ENCODE measurements at regions of chr2 and their contacts with region 1.

Region 1: GRCh38 chr2:119702918-119703401 is 24.0 kb downstream of the TMEM177 start:
- DNase-seq: peak; percentile 39 to 89 (median 74)
- ATAC-seq: peak; percentile 98 to 99 (median 99)
- H3K4me3 ChIP-seq: no peak overlapping the region
- H3K27ac ChIP-seq: no peak overlapping the region
- H3K4me1 ChIP-seq: no peaks in the 10 kb centered on the region
- H3K27me3 ChIP-seq: no peaks in the 10 kb centered on the region
- CTCF ChIP-seq: peak; percentile 90 to 99 (median 96)

Region 2: DNA sequence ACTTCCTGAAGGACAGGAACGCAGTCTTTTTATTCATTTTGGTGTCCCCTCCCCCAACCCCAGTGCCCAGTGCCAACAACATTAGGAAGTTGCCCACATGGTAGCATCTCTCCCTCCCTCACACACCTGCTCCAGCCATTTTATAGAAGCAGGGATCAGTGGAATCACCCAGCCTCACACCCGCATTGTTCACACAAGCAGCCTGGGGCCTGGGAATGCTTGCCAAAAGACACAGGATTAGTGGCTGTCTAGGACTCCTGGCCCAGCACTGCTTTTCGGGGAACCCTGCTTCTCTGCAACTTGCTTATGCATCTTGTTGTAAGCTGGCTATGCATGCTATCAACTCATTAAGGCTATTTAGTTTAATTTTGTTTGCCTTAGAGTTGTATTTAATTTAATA is 253.4 kb before region 1 on chr2:
- intact Hi-C with region 1: no loop called
- DNase-seq: no peak
- ATAC-seq: no peak
- H3K4me3 ChIP-seq: no peak overlapping the region
- H3K27ac ChIP-seq: no peak overlapping the region
- H3K4me1 ChIP-seq: no peaks in the 10 kb centered on the region
- H3K27me3 ChIP-seq: no peaks in the 10 kb centered on the region
- CTCF ChIP-seq: no peak

Region 3: GRCh38 chr2:119826370-119826961 is 123.5 kb after region 1 on chr2:
- intact Hi-C with region 1: loop called in 1 of 3 experiments (anchors 10 kb)
- DNase-seq: no peak
- ATAC-seq: peak in 3 of 4 donors; percentile 28 to 66 (median 56)
- H3K4me3 ChIP-seq: no peak overlapping the region
- H3K27ac ChIP-seq: no peak overlapping the region
- H3K4me1 ChIP-seq: no peaks in the 10 kb centered on the region
- H3K27me3 ChIP-seq: no peaks in the 10 kb centered on the region
- CTCF ChIP-seq: peak in 1 of 4 donors; percentile 12

Region 4: GRCh38 chr2:119996148-119996547 is 293.2 kb after region 1 on chr2:
- intact Hi-C with region 1: no loop called
- DNase-seq: no peak
- ATAC-seq: no peak
- H3K4me3 ChIP-seq: no peak overlapping the region
- H3K27ac ChIP-seq: no peak overlapping the region
- H3K4me1 ChIP-seq: no peaks in the 10 kb centered on the region
- H3K27me3 ChIP-seq: no peaks in the 10 kb centered on the region
- CTCF ChIP-seq: no peak

Region 5: DNA sequence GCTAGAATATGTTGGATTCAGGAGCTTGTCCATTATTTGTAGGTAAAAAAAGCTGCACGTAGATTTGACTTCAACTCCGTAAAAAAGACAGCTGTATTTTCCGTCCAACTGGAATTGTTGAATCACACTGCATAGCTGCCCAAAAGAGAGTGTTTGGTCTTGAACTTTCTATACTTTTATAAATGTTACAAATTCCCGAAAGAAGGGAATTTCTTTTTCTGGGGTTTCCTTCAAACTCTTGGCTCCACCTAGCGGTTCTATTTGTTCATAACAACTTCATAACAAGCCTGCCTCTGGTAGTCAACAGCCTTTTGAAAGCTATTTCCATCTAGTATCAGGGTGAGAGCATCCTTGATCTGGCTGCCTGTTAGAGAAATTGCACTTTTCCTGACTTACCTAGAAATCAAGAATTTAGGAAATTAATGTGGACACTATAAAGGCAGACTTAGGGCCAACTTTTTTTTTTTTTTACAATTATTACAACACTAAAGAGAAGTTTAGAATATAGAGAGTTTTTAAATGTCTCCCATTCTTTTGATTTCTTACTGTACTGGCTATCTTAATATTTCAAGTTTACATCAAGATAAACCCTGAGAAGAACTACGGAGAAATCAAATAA is 472.1 kb after region 1 on chr2:
- intact Hi-C with region 1: loop called in 2 of 3 experiments (anchors 5 to 10 kb)
- DNase-seq: peak in 1 of 6 donors; percentile 31
- ATAC-seq: peak; percentile 56 to 84 (median 78)
- H3K4me3 ChIP-seq: no peak overlapping the region
- H3K27ac ChIP-seq: no peak overlapping the region
- H3K4me1 ChIP-seq: no peaks in the 10 kb centered on the region
- H3K27me3 ChIP-seq: no peaks in the 10 kb centered on the region
- CTCF ChIP-seq: peak; percentile 37 to 72 (median 40)

Measured in pancreas (tissue), 10 donors.